ENCODE measurements at regions of chr14 and their contacts with region 1.

Region 1: DNA sequence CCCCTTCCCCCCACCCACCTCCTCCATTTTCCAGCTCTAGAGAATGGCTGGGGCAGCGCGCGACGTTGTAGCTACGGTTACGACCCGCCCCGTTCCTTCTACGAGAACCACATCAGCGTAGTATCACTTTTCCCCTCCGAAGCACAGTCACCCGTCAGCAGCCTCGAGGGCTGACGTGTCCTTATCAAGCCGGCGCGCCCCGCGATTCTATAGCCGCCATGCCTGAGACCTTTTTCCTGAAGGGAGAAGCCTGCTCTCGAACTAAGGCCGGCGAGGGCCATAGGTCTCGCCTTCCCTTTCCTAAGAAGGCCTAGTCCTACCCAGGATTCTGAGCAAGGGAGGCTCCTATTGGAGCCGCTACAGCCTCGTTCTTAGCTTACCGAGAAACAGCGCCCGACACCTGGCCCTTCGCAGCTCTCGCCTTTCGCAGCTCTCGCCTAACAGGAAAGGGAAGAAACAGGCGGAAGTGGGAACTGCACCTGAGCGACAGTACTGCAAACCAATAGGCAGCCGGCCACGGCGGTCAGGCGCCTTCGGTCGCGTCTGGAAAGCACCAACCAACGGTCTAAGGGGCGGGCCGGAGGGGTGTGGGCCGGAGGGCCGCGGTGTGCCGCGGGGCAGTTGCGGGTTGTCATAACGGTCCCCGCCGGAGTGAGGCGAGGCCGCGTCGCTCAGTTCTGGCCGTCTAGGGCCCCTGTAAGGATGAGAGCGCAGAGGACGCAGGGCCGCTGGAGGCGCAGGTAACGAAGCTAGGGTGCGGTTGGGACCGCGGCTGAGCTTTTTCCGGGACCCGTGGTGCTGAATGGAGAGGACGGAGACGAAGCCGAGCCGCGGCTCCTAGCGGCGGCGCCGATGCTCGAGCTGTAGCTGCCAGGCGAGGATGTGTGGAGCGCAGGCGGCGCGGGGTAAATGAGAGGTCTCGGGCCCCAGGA is at the starts of genes MGAT2 and RPL36AL:
- DNase-seq: peak; percentile 99
- H3K4me3 ChIP-seq: peak within 1 kb of the TSS; percentile 73 to 95 (median 82)
- H3K27ac ChIP-seq: peak within 1 kb of the TSS; percentile 90 to 97 (median 92)
- H3K4me1 ChIP-seq: peaks cover 0 to 44% (median 35%) of the 10 kb centered on the region in 4 donors
- H3K27me3 ChIP-seq: no peaks in the 10 kb centered on the region
- CTCF ChIP-seq: peak in 3 of 4 experiments; percentile 11 to 25 (median 14)
- EP300 ChIP-seq: peak in 1 of 4 donors; percentile 27
- POLR2A ChIP-seq: peak; percentile 95 to 98
- total RNA-seq, gene MGAT2: 17.7 to 18.8 (median 17.9) TPM
- total RNA-seq, gene RPL36AL: 183 to 446 (median 295) TPM

Region 2: DNA sequence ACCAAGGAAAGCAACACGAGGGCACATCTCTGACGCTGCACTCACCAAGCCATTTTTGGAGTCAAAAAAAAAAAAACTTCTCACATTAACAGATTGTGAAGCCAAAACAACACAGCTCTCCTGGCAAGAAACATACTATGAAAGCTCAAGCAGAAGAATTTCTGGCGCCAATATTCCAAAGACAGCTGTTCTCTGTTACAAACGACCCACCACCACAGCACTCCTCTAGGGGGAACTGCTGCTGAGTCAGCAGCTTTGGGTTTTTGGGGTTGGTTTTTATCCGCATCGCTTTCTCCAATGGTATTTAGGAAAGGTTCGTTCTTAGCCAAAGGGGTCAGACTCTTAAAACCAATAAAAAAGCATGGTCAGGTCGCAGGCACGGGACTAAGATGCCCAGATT is 413.6 kb before region 1 on chr14:
- intact Hi-C with region 1: no loop called
- DNase-seq: no peak
- H3K4me3 ChIP-seq: no peak overlapping the region
- H3K27ac ChIP-seq: no peak overlapping the region
- H3K4me1 ChIP-seq: no peaks in the 10 kb centered on the region
- H3K27me3 ChIP-seq: no peaks in the 10 kb centered on the region
- CTCF ChIP-seq: no peak
- EP300 ChIP-seq: no peak
- POLR2A ChIP-seq: no peak

Region 3: GRCh38 chr14:49286974-49287363 is 333.5 kb before region 1 on chr14:
- intact Hi-C with region 1: no loop called
- DNase-seq: no peak
- H3K4me3 ChIP-seq: no peak overlapping the region
- H3K27ac ChIP-seq: no peak overlapping the region
- H3K4me1 ChIP-seq: no peaks in the 10 kb centered on the region
- H3K27me3 ChIP-seq: no peaks in the 10 kb centered on the region
- CTCF ChIP-seq: no peak
- EP300 ChIP-seq: no peak
- POLR2A ChIP-seq: no peak

Region 4: GRCh38 chr14:49569281-49569680 is 51.2 kb before region 1 on chr14:
- intact Hi-C with region 1: no loop called
- DNase-seq: no peak
- H3K4me3 ChIP-seq: no peak overlapping the region
- H3K27ac ChIP-seq: no peak overlapping the region
- H3K4me1 ChIP-seq: no peaks in the 10 kb centered on the region
- H3K27me3 ChIP-seq: no peaks in the 10 kb centered on the region
- CTCF ChIP-seq: no peak
- EP300 ChIP-seq: no peak
- POLR2A ChIP-seq: no peak

Region 5: GRCh38 chr14:49585803-49586672 is 34.4 kb before region 1 on chr14 and contains the start of gene RPS29:
- intact Hi-C with region 1: loop called (anchors 5 kb)
- DNase-seq: peak; percentile 99
- H3K4me3 ChIP-seq: peak within 1 kb of the TSS; percentile 68 to 77 (median 72)
- H3K27ac ChIP-seq: peak within 1 kb of the TSS; percentile 83 to 97 (median 90)
- H3K4me1 ChIP-seq: peaks cover 0 to 29% (median 23%) of the 10 kb centered on the region in 4 donors
- H3K27me3 ChIP-seq: no peaks in the 10 kb centered on the region
- CTCF ChIP-seq: no peak
- EP300 ChIP-seq: peak in 1 of 4 donors; percentile 60
- POLR2A ChIP-seq: peak; percentile 92 to 94
- total RNA-seq, gene RPS29: 3,416 to 22,215 (median 11,134) TPM

Region 6: GRCh38 chr14:49598485-49599300 is 21.8 kb before region 1 on chr14 and contains the start of gene LRR1:
- intact Hi-C with region 1: loop called (anchors 1 kb)
- DNase-seq: peak; percentile 89
- H3K4me3 ChIP-seq: peak within 1 kb of the TSS; percentile 77 to 94 (median 85)
- H3K27ac ChIP-seq: peak within 1 kb of the TSS; percentile 93 to 98 (median 96)
- H3K4me1 ChIP-seq: peaks cover 0 to 15% (median 4%) of the 10 kb centered on the region in 4 donors
- H3K27me3 ChIP-seq: no peaks in the 10 kb centered on the region
- CTCF ChIP-seq: no peak
- EP300 ChIP-seq: no peak
- POLR2A ChIP-seq: peak; percentile 28 to 39
- total RNA-seq, gene LRR1: 6.8 to 9.7 (median 8.2) TPM

Region 7: GRCh38 chr14:49692811-49693734 is 72.6 kb after region 1 on chr14 and contains the start of gene KLHDC1:
- intact Hi-C with region 1: no loop called
- DNase-seq: peak; percentile 95
- H3K4me3 ChIP-seq: peak within 1 kb of the TSS; percentile 56 to 81 (median 66)
- H3K27ac ChIP-seq: peak within 1 kb of the TSS; percentile 91 to 99 (median 96)
- H3K4me1 ChIP-seq: peaks cover 0 to 21% (median 16%) of the 10 kb centered on the region in 4 donors
- H3K27me3 ChIP-seq: no peaks in the 10 kb centered on the region
- CTCF ChIP-seq: no peak
- EP300 ChIP-seq: no peak
- POLR2A ChIP-seq: peak; percentile 94 to 96
- total RNA-seq, gene KLHDC1: 11.4 to 19.1 (median 13.6) TPM